ENCODE measurements at regions of chrX and their contacts with region 1.

Region 1: DNA sequence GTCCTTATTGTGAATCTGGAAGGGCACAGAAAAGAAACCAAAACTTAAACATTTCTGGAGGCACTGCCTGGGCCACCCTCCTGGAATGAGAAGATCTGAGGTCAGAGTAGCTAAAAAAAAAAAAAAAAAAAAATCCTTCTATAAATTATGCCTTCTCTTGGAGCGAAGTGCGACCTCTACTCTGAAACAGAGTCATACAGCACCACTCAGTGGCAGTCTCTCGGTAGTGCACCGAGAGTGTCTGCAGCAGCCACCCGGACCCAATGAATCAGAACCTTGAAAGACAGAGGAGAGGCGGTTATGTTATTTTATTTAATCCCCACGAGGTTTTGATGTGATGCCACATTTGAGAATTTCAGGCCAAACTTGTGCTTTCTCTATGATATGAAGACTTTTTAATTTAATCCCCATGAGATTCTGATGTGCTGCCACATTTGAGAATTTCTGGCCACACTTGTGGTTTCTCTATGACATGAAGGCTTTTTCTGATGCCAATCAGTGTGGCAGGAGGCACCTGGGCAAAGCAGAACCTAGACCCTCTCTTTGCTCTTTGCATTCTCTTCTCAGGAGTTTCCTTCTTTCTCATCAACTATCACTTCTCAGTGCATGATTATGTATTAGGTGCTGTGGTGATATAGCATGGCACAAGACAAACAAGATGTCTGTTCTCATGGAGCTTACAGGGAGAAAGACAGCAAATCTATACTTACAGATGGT is 5.6 kb upstream of the CT47C1 start:
- DNase-seq: peak; percentile 52 to 71
- H3K4me3 ChIP-seq: no peak overlapping the region
- H3K27ac ChIP-seq: no peak overlapping the region
- H3K4me1 ChIP-seq: no peaks in the 10 kb centered on the region
- H3K27me3 ChIP-seq: peaks cover 5% of the 10 kb centered on the region; the same call in 1 of the 2 replicates
- CTCF ChIP-seq: peak; percentile 93

Region 2: GRCh38 chrX:117645639-117646038 is 1421.5 kb before region 1 on chrX:
- CTCF ChIA-PET with region 1: no interaction called
- POLR2A ChIA-PET with region 1: no interaction called
- intact Hi-C with region 1: no loop called
- DNase-seq: no peak
- H3K4me3 ChIP-seq: no peak overlapping the region
- H3K27ac ChIP-seq: no peak overlapping the region
- H3K4me1 ChIP-seq: no peaks in the 10 kb centered on the region
- H3K27me3 ChIP-seq: no peaks in the 10 kb centered on the region
- CTCF ChIP-seq: no peak

Region 3: GRCh38 chrX:118459494-118459893 is 607.7 kb before region 1 on chrX:
- CTCF ChIA-PET with region 1: interaction called, 7 read pairs
- POLR2A ChIA-PET with region 1: no interaction called
- intact Hi-C with region 1: loop called (anchors 10 kb)
- DNase-seq: peak; percentile 19 to 50
- H3K4me3 ChIP-seq: no peak overlapping the region
- H3K27ac ChIP-seq: no peak overlapping the region
- H3K4me1 ChIP-seq: no peaks in the 10 kb centered on the region
- H3K27me3 ChIP-seq: no peaks in the 10 kb centered on the region
- CTCF ChIP-seq: peak; percentile 84

Region 4: DNA sequence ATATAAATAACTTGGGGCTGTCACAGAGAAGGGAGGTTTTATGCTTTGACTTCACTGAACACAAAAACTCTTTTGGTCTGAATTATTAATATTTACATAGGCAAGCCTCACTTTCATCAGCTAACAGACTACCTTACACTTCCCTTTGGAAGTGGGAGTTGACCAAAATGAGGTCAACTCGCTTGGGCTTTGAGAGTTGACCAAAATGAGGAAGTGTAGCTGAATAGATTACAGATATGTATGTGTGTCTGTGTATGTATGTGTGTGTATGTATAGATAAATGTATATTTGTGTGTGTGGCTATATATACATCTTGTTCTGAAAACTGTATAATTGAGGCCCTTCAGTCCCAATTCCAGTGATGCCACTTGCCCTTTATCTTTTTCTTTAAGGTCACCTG is 453.0 kb before region 1 on chrX:
- CTCF ChIA-PET with region 1: interaction called, 12 read pairs
- POLR2A ChIA-PET with region 1: no interaction called
- intact Hi-C with region 1: no loop called
- DNase-seq: no peak
- H3K4me3 ChIP-seq: no peak overlapping the region
- H3K27ac ChIP-seq: no peak overlapping the region
- H3K4me1 ChIP-seq: no peaks in the 10 kb centered on the region
- H3K27me3 ChIP-seq: no peaks in the 10 kb centered on the region
- CTCF ChIP-seq: no peak

Region 5: GRCh38 chrX:119004920-119005524 is 62.2 kb before region 1 on chrX:
- CTCF ChIA-PET with region 1: interaction called, 32 read pairs
- POLR2A ChIA-PET with region 1: interaction called, 7 read pairs
- intact Hi-C with region 1: loop called (anchors 1 kb)
- DNase-seq: peak; percentile 46 to 55
- H3K4me3 ChIP-seq: no peak overlapping the region
- H3K27ac ChIP-seq: no peak overlapping the region
- H3K4me1 ChIP-seq: no peaks in the 10 kb centered on the region
- H3K27me3 ChIP-seq: no peaks in the 10 kb centered on the region
- CTCF ChIP-seq: peak; percentile 90

Region 6: DNA sequence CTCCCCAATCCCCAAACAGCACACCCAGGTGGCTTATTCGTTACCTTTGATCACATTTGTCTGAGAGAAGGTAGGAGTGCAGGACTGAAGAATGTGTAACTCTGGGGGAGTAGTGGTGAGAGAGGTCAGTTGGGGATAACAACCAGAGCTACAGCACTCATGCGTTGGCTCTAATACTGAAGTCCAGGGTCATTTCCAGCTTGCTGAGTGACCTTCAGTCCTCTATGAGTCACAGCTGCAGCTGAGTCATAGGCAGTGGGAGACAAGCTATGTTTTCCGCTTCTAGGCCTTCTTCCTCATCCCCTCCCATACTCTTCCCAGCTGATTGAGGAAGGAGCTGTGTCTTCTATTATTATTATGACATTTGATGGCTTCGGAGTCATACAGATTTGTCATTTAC is 26.0 kb before region 1 on chrX:
- CTCF ChIA-PET with region 1: interaction called, 18 read pairs
- POLR2A ChIA-PET with region 1: interaction called, 6 read pairs
- intact Hi-C with region 1: no loop called
- DNase-seq: peak; percentile 63 to 93
- H3K4me3 ChIP-seq: no peak overlapping the region
- H3K27ac ChIP-seq: peak overlapping the region; percentile 33
- H3K4me1 ChIP-seq: peaks cover 53% of the 10 kb centered on the region
- H3K27me3 ChIP-seq: no peaks in the 10 kb centered on the region
- CTCF ChIP-seq: no peak

Region 7: GRCh38 chrX:119181491-119181890 is 114.3 kb after region 1 on chrX:
- CTCF ChIA-PET with region 1: no interaction called
- POLR2A ChIA-PET with region 1: no interaction called
- intact Hi-C with region 1: no loop called
- DNase-seq: peak in 1 of 2 experiments; percentile 16
- H3K4me3 ChIP-seq: no peak overlapping the region
- H3K27ac ChIP-seq: no peak overlapping the region
- H3K4me1 ChIP-seq: no peaks in the 10 kb centered on the region
- H3K27me3 ChIP-seq: no peaks in the 10 kb centered on the region
- CTCF ChIP-seq: peak; percentile 69

Region 8: GRCh38 chrX:119502727-119503483 is 435.7 kb after region 1 on chrX:
- CTCF ChIA-PET with region 1: no interaction called
- POLR2A ChIA-PET with region 1: interaction called, 21 read pairs
- intact Hi-C with region 1: no loop called
- DNase-seq: peak; percentile 78 to 86
- H3K4me3 ChIP-seq: peak overlapping the region; percentile 43; the same call in 1 of the 2 replicates
- H3K27ac ChIP-seq: peak overlapping the region; percentile 95
- H3K4me1 ChIP-seq: peaks cover 49% of the 10 kb centered on the region
- H3K27me3 ChIP-seq: no peaks in the 10 kb centered on the region
- CTCF ChIP-seq: no peak; the same call in 1 of the 2 replicates

Measured in PC-9 (cell line).